ENCODE measurements at regions of chr10 and their contacts with region 1.

Region 1: DNA sequence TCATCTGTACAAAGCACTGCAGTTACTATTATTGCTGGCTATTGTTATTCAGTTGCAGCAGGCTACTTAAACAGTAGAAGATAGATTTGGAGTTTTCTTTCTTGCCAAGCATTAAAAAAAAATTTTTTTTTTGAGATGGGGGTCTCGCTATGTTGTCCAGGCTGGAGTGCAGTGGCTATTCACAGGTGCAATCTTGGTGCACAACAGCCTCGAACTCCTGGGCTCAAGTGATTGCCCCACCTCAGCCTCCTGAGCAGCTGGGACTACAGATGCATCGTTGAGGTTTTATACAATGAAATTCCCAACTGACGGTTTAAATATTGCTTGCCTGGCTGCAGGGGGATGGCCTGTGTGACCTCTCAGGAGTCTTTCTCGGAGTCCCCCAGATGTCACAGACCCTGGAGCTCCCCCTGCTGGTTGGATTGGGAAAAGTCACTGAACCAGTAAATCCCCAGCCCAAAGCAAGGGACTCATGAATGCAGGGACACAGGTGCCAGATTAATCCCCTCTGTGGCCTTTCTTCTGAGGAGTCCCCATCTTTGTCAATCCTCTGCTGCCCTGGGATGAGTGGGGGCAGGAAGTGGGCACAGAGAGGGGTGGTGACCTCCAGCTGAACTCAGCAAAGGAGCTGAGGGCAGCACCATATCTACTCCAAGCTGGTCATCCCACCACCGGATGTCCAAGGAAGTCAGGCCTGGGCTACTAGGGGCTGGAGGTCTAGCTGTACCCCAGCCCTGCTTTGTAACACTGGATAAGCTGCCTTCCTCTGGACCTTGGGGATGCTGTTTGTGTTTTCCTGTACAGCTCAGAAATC is 149.6 kb downstream of the C10orf105 start:
- DNase-seq: peak; percentile 54 to 86 (median 77)
- H3K4me3 ChIP-seq: no peak overlapping the region
- H3K27ac ChIP-seq: no peak overlapping the region
- H3K4me1 ChIP-seq: no peaks in the 10 kb centered on the region
- H3K27me3 ChIP-seq: no peaks in the 10 kb centered on the region
- CTCF ChIP-seq: peak; percentile 64 to 87 (median 78)
- POLR2A ChIP-seq: no peak

Region 2: GRCh38 chr10:71396084-71396720 is 173.8 kb before region 1 on chr10:
- intact Hi-C with region 1: loop called (anchors 5 kb)
- DNase-seq: peak in 4 of 7 donors; percentile 26 to 66 (median 38)
- H3K4me3 ChIP-seq: peak overlapping the region in 1 of 4 donors; percentile 65
- H3K27ac ChIP-seq: peak overlapping the region in 1 of 5 donors; percentile 45
- H3K4me1 ChIP-seq: peaks cover 9 to 13% of the 10 kb centered on the region in 2 donors
- H3K27me3 ChIP-seq: peaks cover 25% of the 10 kb centered on the region
- CTCF ChIP-seq: peak in 5 of 6 experiments; percentile 23 to 45 (median 37)
- POLR2A ChIP-seq: no peak

Measured in adrenal gland (tissue), 19 donors.